ENCODE measurements at regions of chr1 and their contacts with region 1.

Region 1: GRCh38 chr1:117260761-117261423 is 50.2 kb upstream of the VTCN1 start:
- DNase-seq: no peak
- H3K4me3 ChIP-seq: no peak overlapping the region
- H3K27ac ChIP-seq: no peak overlapping the region
- H3K4me1 ChIP-seq: no peaks in the 10 kb centered on the region
- H3K27me3 ChIP-seq: peaks cover 0 to 3% (median 0%) of the 10 kb centered on the region in 7 donors
- CTCF ChIP-seq: no peak
- POLR2A ChIP-seq: no peak

Region 2: DNA sequence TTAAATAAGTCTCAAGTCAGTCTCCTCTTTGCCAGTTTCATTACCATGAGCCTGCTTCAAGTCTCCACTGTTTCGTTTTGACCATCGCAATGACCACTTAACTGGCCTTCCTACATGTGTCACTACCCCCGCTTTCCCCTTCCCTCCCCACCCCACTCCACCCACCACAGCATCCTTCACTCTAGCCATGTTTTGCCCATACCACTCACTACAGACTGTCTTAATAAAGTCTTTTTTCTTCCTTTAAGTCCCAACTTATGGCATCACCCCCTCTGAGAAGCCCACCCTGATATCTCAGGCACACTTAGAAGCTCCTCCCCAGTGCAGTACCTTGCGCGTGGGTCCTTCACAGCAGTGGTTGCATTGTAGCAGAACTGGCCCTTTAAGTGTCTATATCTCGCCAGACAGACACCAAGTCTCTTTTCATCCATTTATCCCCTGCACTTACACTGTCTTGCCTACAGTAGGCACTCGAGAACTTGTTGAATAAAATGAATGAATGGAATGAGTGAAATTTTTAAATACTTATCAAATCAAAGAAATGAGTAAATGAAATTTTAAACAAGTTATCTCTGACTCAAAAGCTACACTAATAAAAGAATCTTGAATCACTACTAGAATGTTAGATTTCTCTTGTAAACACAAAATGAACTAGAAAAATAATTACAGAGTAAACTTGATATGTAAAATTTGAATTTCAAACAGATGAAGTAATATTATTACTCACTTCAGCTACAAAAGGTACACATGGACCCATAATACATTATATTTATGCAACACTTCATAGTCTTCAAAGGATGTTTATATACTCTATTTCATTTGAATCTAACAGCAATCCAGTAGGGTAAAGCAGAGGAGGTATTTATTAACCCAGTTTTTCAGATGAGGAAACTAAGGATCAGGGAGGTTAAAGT is 51.6 kb after region 1 on chr1:
- intact Hi-C with region 1: loop called (anchors 5 kb)
- DNase-seq: no peak
- H3K4me3 ChIP-seq: no peak overlapping the region
- H3K27ac ChIP-seq: no peak overlapping the region
- H3K4me1 ChIP-seq: no peaks in the 10 kb centered on the region
- H3K27me3 ChIP-seq: no peaks in the 10 kb centered on the region
- CTCF ChIP-seq: peak in 8 of 11 experiments; percentile 24 to 58 (median 44)
- POLR2A ChIP-seq: no peak

Region 3: GRCh38 chr1:117466761-117467160 is 205.9 kb after region 1 on chr1:
- intact Hi-C with region 1: no loop called
- DNase-seq: no peak
- H3K4me3 ChIP-seq: no peak overlapping the region
- H3K27ac ChIP-seq: peak overlapping the region in 1 of 8 donors; percentile 18
- H3K4me1 ChIP-seq: no peaks in the 10 kb centered on the region
- H3K27me3 ChIP-seq: no peaks in the 10 kb centered on the region
- CTCF ChIP-seq: no peak
- POLR2A ChIP-seq: no peak

Region 4: DNA sequence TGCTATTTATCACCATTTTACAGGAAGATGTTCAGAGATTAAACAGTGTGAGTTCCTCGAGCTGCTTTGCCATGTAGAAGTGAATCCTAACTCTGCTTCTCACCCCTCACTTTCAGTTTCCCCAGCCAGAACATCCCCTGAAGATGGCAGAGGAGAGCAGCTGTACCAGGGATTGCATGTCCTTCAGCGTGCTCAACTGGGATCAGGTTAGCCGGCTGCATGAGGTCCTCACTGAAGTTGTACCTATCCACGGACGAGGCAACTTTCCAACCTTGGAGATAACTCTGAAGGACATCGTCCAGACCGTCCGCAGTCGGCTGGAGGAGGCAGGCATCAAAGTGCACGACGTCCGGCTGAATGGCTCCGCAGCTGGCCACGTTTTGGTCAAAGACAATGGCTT is 361.8 kb after region 1 on chr1:
- intact Hi-C with region 1: no loop called
- DNase-seq: no peak
- H3K4me3 ChIP-seq: no peak overlapping the region
- H3K27ac ChIP-seq: peak overlapping the region in 1 of 8 donors; percentile 14
- H3K4me1 ChIP-seq: peaks cover 0 to 71% (median 24%) of the 10 kb centered on the region in 6 donors
- H3K27me3 ChIP-seq: no peaks in the 10 kb centered on the region
- CTCF ChIP-seq: no peak
- POLR2A ChIP-seq: no peak

Measured in spleen (tissue), 13 donors.